GM12878 (cell line): ENCODE measurements at regions of chr6 and their contacts with region 1.

Region 1: DNA sequence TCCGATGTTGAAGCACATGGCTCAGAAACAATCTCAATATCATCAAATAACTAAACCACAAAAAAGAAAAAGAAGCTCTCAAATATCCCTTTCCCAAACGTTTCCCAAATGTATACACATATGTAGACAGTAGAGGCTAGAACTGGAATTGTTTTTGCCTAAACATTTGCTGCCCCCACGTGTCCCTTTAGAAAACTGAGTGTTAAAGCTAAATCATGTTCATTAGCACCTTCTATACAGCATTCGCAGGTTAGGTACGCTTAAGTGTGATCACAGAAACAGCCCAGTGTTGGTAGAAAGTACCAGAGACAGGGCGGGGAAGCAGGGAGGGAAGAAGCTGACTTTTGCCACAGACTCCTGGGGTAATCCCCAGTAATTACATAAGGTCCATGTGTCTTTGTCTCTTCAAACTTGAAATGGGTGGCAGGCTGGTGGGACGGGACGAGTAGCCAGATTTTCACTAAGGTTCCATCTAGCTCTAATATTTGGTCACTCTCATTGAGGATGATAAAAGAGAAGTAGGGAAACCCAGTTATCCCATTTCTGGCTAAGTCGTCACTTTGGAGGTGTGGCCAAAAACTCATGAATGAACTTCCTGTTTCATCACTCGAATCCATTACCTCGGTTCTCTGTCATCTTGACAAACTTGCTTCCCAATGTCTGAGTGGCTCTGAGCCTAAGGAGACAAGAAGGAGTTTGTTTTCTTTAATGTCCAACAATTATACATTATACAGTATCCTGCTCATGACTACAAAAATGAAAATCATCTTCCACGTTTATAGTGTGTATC is 15.0 kb upstream of the TFAP2A start:
- DNase-seq: peak; percentile 53
- ATAC-seq: peak; percentile 74
- H3K4me3 ChIP-seq: 0 out of 2 replicates have a peak overlapping the region, but pooled peaks have one; percentile 13
- H3K27ac ChIP-seq: no peak overlapping the region
- H3K4me1 ChIP-seq: no peaks in the 10 kb centered on the region; the same call in none of the 2 replicates
- H3K27me3 ChIP-seq: peaks cover 0 to 5% of the 10 kb centered on the region in 2 experiments; a peak in 1 of 4 replicates
- CTCF ChIP-seq: peak; percentile 55 to 78 (median 70); a peak in 5 of 6 replicates
- EP300 ChIP-seq: no peak
- POLR2A ChIP-seq: no peak
- RAD21 ChIP-seq: peak; percentile 85

Region 2: DNA sequence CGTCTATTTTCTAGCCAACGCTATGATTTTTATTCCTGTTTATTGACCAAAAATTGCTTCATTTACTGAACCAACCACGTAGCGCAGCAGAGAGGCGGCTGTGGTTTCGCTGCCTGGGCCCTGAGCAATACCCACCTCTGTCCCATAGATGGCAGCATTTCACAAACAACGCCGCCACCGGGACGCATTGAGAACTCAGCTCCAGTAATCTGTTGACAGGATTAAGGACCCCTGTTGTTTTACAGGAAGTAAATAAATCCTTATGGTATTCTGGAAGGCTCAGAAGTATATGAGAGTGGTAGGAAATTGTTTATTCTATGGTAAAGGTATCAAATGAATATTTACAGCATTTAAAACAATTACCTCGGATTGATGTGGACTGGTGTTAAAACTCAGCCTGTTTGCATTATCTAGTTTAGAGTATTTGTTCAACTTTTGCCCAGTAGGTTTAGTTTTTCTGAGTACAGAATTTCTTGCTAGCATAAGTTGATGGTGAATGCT is 1446.6 kb before region 1 on chr6:
- CTCF ChIA-PET with region 1: interaction called, 27 read pairs
- POLR2A ChIA-PET with region 1: no interaction called
- RAD21 ChIA-PET with region 1: interaction called, 20 read pairs
- SMC1A ChIA-PET with region 1: interaction called, 21 read pairs
- in situ Hi-C with region 1: loop called (anchors 5 kb)
- intact Hi-C with region 1: loop called (anchors 2 kb)
- DNase-seq: peak; percentile 4
- ATAC-seq: peak; percentile 98
- H3K4me3 ChIP-seq: no peak overlapping the region
- H3K27ac ChIP-seq: no peak overlapping the region
- H3K4me1 ChIP-seq: no peaks in the 10 kb centered on the region
- H3K27me3 ChIP-seq: no peaks in the 10 kb centered on the region
- CTCF ChIP-seq: peak; percentile 89 to 97 (median 93)
- EP300 ChIP-seq: no peak
- POLR2A ChIP-seq: no peak
- RAD21 ChIP-seq: peak; percentile 87

Region 3: DNA sequence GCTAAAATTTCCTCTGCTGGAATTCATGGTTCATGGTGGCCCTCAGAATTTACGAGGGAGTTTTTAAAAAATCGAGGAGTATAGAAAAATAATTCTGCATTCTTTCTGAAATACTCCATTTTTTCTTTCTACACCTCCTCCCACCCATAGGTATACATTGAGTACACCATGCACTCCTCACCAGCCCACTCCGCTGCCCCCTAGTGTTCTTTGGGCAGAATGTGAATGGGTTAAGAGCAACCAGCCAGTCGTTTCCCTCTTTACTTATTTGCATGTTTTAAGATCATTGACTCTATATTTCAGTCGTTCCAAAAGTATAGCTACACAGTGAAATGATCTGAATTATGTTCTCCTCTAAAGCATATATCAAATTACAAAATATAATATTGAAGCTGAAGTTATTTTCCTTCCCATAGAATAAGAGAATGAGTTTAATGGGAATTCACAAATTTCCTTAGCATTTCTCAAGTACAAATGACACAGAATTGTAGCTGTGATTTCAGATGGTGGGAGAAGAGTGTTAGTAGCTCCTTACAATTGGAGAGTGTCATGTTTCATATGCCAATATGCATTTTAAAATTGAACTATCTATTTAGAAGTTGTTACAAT is 1016.8 kb before region 1 on chr6:
- CTCF ChIA-PET with region 1: interaction called, 6 read pairs
- POLR2A ChIA-PET with region 1: no interaction called
- RAD21 ChIA-PET with region 1: no interaction called
- SMC1A ChIA-PET with region 1: no interaction called
- in situ Hi-C with region 1: no loop called
- intact Hi-C with region 1: loop called (anchors 10 kb)
- DNase-seq: no peak
- ATAC-seq: peak; percentile 97
- H3K4me3 ChIP-seq: no peak overlapping the region
- H3K27ac ChIP-seq: no peak overlapping the region
- H3K4me1 ChIP-seq: no peaks in the 10 kb centered on the region
- H3K27me3 ChIP-seq: no peaks in the 10 kb centered on the region
- CTCF ChIP-seq: peak; percentile 54 to 72 (median 61)
- EP300 ChIP-seq: no peak
- POLR2A ChIP-seq: no peak
- RAD21 ChIP-seq: peak; percentile 65

Region 4: GRCh38 chr6:9745476-9745875 is 684.4 kb before region 1 on chr6:
- CTCF ChIA-PET with region 1: no interaction called
- POLR2A ChIA-PET with region 1: no interaction called
- RAD21 ChIA-PET with region 1: no interaction called
- SMC1A ChIA-PET with region 1: no interaction called
- in situ Hi-C with region 1: no loop called
- intact Hi-C with region 1: no loop called
- DNase-seq: no peak
- ATAC-seq: no peak
- H3K4me3 ChIP-seq: no peak overlapping the region
- H3K27ac ChIP-seq: no peak overlapping the region
- H3K4me1 ChIP-seq: no peaks in the 10 kb centered on the region
- H3K27me3 ChIP-seq: no peaks in the 10 kb centered on the region
- CTCF ChIP-seq: no peak
- EP300 ChIP-seq: no peak
- POLR2A ChIP-seq: no peak
- RAD21 ChIP-seq: no peak

Region 5: GRCh38 chr6:10030942-10031537 is 398.8 kb before region 1 on chr6:
- CTCF ChIA-PET with region 1: interaction called, 41 read pairs
- POLR2A ChIA-PET with region 1: no interaction called
- RAD21 ChIA-PET with region 1: interaction called, 5 read pairs
- SMC1A ChIA-PET with region 1: interaction called, 21 read pairs
- in situ Hi-C with region 1: loop called (anchors 5 kb)
- intact Hi-C with region 1: loop called (anchors 2 kb)
- DNase-seq: no peak
- ATAC-seq: peak; percentile 55; the same call in 2 of the 3 replicates
- H3K4me3 ChIP-seq: no peak overlapping the region
- H3K27ac ChIP-seq: no peak overlapping the region
- H3K4me1 ChIP-seq: no peaks in the 10 kb centered on the region
- H3K27me3 ChIP-seq: no peaks in the 10 kb centered on the region
- CTCF ChIP-seq: peak; percentile 39 to 54 (median 45); a peak in 5 of 6 replicates
- EP300 ChIP-seq: no peak
- POLR2A ChIP-seq: no peak
- RAD21 ChIP-seq: peak; percentile 32; the same call in 1 of the 2 replicates

Region 6: DNA sequence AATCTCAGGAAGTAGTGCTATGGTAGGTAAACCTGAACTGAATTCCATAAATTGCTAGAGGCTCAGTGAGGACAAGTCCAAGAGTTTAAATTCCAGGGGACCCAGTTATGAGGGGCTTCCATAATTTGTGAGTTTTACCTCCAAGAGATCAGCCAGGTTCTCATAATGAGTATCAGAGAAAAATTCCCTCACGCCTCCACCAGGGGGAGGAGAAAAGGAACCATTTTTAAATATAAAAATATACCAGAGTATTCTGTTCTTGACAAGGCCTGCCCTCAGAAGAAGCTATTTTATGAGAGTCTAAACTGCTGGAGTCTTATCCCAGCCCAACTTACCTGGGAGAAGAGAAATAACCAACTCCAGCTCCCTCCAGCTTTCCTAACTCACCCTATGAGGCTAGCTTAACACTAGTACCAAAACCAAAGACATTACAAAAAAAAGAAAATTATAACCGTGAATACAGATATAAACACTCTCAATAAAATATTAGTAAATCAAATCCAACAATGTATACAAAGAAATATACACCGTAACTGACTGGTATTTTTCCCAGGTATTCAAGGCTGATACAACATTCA is 173.6 kb before region 1 on chr6:
- CTCF ChIA-PET with region 1: interaction called, 17 read pairs
- POLR2A ChIA-PET with region 1: no interaction called
- RAD21 ChIA-PET with region 1: interaction called, 9 read pairs
- SMC1A ChIA-PET with region 1: interaction called, 9 read pairs
- in situ Hi-C with region 1: loop called (anchors 5 kb)
- intact Hi-C with region 1: loop called (anchors 1 kb)
- DNase-seq: no peak
- ATAC-seq: peak; percentile 55; the same call in 2 of the 3 replicates
- H3K4me3 ChIP-seq: no peak overlapping the region
- H3K27ac ChIP-seq: no peak overlapping the region
- H3K4me1 ChIP-seq: no peaks in the 10 kb centered on the region
- H3K27me3 ChIP-seq: no peaks in the 10 kb centered on the region; a peak in 1 of 4 replicates
- CTCF ChIP-seq: peak; percentile 34 to 47 (median 43); a peak in 5 of 6 replicates
- EP300 ChIP-seq: no peak
- POLR2A ChIP-seq: no peak
- RAD21 ChIP-seq: 0 out of 2 replicates have a peak, but pooled peaks have one; percentile 26

Region 7: GRCh38 chr6:10404107-10404798 is 25.6 kb before region 1 on chr6:
- CTCF ChIA-PET with region 1: interaction called, 8 read pairs
- POLR2A ChIA-PET with region 1: interaction called, 4 read pairs
- RAD21 ChIA-PET with region 1: interaction called, 11 read pairs
- SMC1A ChIA-PET with region 1: interaction called, 11 read pairs
- in situ Hi-C with region 1: no loop called
- intact Hi-C with region 1: no loop called
- DNase-seq: peak; percentile 79
- ATAC-seq: peak; percentile 95
- H3K4me3 ChIP-seq: peak overlapping the region; percentile 66
- H3K27ac ChIP-seq: peak overlapping the region; percentile 50
- H3K4me1 ChIP-seq: no peaks in the 10 kb centered on the region; the same call in 1 of the 2 replicates
- H3K27me3 ChIP-seq: peaks cover 0 to 13% of the 10 kb centered on the region in 2 experiments; a peak in 2 of 4 replicates
- CTCF ChIP-seq: peak in 2 of 3 experiments; percentile 45 to 64; a peak in 4 of 6 replicates
- EP300 ChIP-seq: no peak
- POLR2A ChIP-seq: peak; percentile 68
- RAD21 ChIP-seq: 0 out of 2 replicates have a peak, but pooled peaks have one; percentile 16

Region 8: GRCh38 chr6:10465629-10466504 is 36.0 kb after region 1 on chr6:
- CTCF ChIA-PET with region 1: interaction called, 25 read pairs
- POLR2A ChIA-PET with region 1: no interaction called
- RAD21 ChIA-PET with region 1: interaction called, 26 read pairs
- SMC1A ChIA-PET with region 1: interaction called, 42 read pairs
- in situ Hi-C with region 1: no loop called
- intact Hi-C with region 1: no loop called
- DNase-seq: no peak
- ATAC-seq: peak; percentile 69
- H3K4me3 ChIP-seq: no peak overlapping the region
- H3K27ac ChIP-seq: no peak overlapping the region
- H3K4me1 ChIP-seq: peaks cover under 1% of the 10 kb centered on the region; the same call in 1 of the 2 replicates
- H3K27me3 ChIP-seq: no peaks in the 10 kb centered on the region; a peak in 1 of 4 replicates
- CTCF ChIP-seq: peak; percentile 48 to 73 (median 59)
- EP300 ChIP-seq: no peak
- POLR2A ChIP-seq: no peak
- RAD21 ChIP-seq: peak; percentile 44